Activated CD4-positive, alpha-beta T cell treated with anti-CD3 and anti-CD28 coated beads for 36 hours (primary cell): ENCODE measurements at regions of chr2 and their contacts with region 1.

Region 1: DNA sequence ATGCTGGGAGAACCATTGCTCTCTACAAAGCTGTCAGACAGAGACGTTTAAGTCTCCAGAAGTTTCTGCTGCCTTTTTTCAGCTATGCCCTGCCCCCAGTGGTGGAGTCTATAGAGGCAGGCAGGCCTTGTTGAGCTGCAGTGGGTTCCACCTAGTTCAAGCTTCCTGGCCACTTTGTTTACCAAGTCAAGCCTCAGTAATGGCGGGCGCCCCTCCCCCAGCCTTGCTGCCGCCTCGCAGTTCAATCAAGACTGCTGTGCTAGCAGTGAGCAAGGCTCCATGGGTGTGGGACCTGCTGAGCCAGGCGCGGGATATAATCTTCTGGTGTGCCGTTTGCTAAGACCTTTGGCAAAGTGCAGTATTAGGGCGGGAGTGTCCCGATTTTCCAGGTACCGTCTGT is 52.7 kb upstream of the SCYGR2 start:
- DNase-seq: peak; percentile 48
- ATAC-seq: no peak
- H3K4me3 Mint-ChIP-seq: no peak overlapping the region
- H3K27ac Mint-ChIP-seq: no peak overlapping the region
- H3K4me1 Mint-ChIP-seq: peaks cover 12% of the 10 kb centered on the region
- H3K27me3 Mint-ChIP-seq: no peaks in the 10 kb centered on the region

Region 2: GRCh38 chr2:227528803-227529202 is 17.2 kb before region 1 on chr2:
- CTCF ChIA-PET with region 1: interaction called, 11 read pairs
- POLR2A ChIA-PET with region 1: no interaction called
- intact Hi-C with region 1: no loop called
- DNase-seq: no peak
- ATAC-seq: peak; percentile 75
- H3K4me3 Mint-ChIP-seq: no peak overlapping the region
- H3K27ac Mint-ChIP-seq: peak overlapping the region; percentile 51
- H3K4me1 Mint-ChIP-seq: peaks cover 22% of the 10 kb centered on the region
- H3K27me3 Mint-ChIP-seq: no peaks in the 10 kb centered on the region

Region 3: DNA sequence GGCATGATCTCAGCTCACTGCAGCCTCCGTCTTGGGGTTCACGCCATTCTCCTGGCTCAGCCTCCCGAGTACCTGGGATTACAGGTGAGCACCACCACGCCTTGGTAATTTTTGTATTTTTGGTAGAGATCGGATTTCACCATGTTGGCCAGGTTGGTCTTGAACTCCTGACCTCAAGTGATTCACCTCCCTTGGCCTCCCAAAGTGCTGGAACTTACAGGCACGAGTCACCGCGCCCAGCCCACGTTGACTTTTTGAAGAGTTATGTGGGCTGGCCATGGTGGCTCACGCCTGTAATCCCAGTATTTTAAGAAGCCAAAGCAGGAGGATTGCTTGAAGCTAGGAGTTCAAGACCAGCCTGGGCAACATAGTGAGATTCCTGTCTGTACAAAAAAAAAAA is 288.4 kb after region 1 on chr2:
- CTCF ChIA-PET with region 1: no interaction called
- POLR2A ChIA-PET with region 1: no interaction called
- intact Hi-C with region 1: no loop called
- DNase-seq: no peak
- ATAC-seq: no peak
- H3K4me3 Mint-ChIP-seq: no peak overlapping the region
- H3K27ac Mint-ChIP-seq: no peak overlapping the region
- H3K4me1 Mint-ChIP-seq: no peaks in the 10 kb centered on the region
- H3K27me3 Mint-ChIP-seq: peaks cover 2% of the 10 kb centered on the region